HEK293T (cell line): ENCODE measurements at regions of chr4 and their contacts with region 1.

Region 1: GRCh38 chr4:186587416-186588018 is 32.1 kb upstream of the MTNR1A start:
- DNase-seq: peak; percentile 35

Region 2: GRCh38 chr4:186297013-186297645 is 290.4 kb before region 1 on chr4:
- CTCF ChIA-PET with region 1: interaction called, 11 read pairs
- POLR2A ChIA-PET with region 1: no interaction called
- DNase-seq: peak; percentile 10

Region 3: GRCh38 chr4:186557486-186557885 is 30.0 kb before region 1 on chr4:
- CTCF ChIA-PET with region 1: interaction called, 11 read pairs
- POLR2A ChIA-PET with region 1: no interaction called
- DNase-seq: no peak

Region 4: DNA sequence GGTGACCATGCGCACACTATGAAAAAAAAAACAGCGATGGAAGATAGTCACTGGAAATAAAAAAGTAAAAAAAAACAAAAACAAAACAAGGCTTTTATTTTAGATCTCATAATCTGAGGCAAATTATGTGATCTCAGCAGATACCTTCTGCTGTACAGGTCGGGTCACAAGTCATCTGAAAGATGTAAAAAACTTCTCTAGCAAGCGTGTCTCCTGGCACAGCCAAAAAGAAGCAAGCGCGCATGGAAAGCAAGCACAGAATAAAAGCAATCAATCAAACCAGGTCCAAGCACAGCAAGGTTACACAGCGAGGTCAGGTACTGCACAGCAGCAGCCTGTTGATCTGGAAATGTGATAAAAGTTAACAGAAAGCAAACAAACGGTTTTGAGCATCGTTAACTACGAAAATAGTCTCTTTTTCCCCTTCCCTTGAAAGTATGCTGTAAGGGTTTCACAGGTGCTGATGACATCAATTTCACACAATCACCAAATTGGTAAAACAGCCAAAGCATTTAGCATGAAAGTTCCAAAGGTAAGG is 47.1 kb after region 1 on chr4:
- CTCF ChIA-PET with region 1: no interaction called
- POLR2A ChIA-PET with region 1: no interaction called
- DNase-seq: no peak